ENCODE measurements at regions of chr19 and their contacts with region 1.

Region 1: GRCh38 chr19:925526-926322 is at the start of gene ARID3A:
- DNase-seq: peak; percentile 82
- ATAC-seq: peak; percentile 68
- H3K4me3 Mint-ChIP-seq: peak within 1 kb of the TSS; percentile 77
- H3K27ac Mint-ChIP-seq: peak within 1 kb of the TSS; percentile 75
- H3K4me1 Mint-ChIP-seq: peaks cover 17% of the 10 kb centered on the region
- H3K27me3 Mint-ChIP-seq: no peaks in the 10 kb centered on the region
- total RNA-seq, gene ARID3A: 30.6 to 35.9 TPM

Region 2: DNA sequence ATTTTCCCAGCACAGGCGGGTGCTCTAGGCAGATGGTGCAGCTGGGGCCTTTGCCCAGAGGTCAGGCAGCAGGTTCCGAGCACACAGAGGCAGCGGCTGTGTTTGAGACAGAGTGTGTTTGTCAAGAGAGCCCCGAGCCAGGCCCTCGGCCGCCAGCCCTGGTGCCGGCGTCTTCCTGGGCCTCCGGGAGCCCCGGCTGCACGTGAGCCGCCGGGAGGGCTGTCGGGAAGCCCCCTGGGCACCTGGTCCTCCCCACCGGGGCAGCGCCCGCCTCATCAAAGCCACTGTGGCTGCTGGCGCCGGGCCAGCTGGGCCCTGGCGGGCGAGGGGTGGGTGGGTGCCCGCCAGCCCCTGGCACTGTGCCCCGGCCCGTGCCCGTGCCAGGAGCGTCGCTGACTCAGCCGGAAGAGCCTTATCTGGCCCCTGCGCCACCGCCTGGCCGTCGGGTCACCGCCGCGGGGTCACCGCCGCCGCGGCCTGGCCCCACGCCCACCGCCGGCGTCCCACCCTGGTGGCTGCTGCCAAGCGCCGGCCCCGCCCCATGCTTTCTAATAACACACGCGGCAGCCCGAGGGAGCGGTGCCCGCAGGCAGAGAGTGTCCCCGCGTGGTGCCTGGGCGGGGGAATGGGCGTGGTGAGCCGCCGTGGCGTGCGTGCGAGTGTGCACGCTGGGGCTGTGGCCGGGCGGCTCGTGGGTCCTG is 15.0 kb after region 1 on chr19:
- CTCF ChIA-PET with region 1: interaction called, 18 read pairs
- DNase-seq: peak; percentile 66
- ATAC-seq: peak; percentile 64
- H3K4me3 Mint-ChIP-seq: peak overlapping the region; percentile 38
- H3K27ac Mint-ChIP-seq: no peak overlapping the region
- H3K4me1 Mint-ChIP-seq: peaks cover 27% of the 10 kb centered on the region
- H3K27me3 Mint-ChIP-seq: no peaks in the 10 kb centered on the region

Measured in activated CD8-positive, alpha-beta memory T cell treated with anti-CD3 and anti-CD28 coated beads, Interleukin-2, amount 10 ng/mL, durations not matched to agents 7 days and 5 days (primary cell).